SK-N-SH (cell line): ENCODE measurements at regions of chr17 and their contacts with region 1.

Region 1: GRCh38 chr17:76547184-76547641 is 7.4 kb downstream of the PRCD start:
- DNase-seq: peak; percentile 83
- H3K4me3 ChIP-seq: peak overlapping the region in 1 of 2 experiments; percentile 11; a peak in 2 of 4 replicates
- H3K27ac ChIP-seq: peak overlapping the region; percentile 57 to 99
- H3K4me1 ChIP-seq: peaks cover 25 to 56% of the 10 kb centered on the region in 2 experiments
- H3K27me3 ChIP-seq: peaks cover 9% of the 10 kb centered on the region; the same call in 1 of the 2 replicates
- CTCF ChIP-seq: peak; percentile 92
- EP300 ChIP-seq: peak in 1 of 2 experiments; percentile 7; a peak in 1 of 4 replicates
- RAD21 ChIP-seq: peak; percentile 99

Region 2: GRCh38 chr17:76452660-76453430 is 94.4 kb before region 1 on chr17 and contains the start of gene UBE2O:
- CTCF ChIA-PET with region 1: interaction called, 28 read pairs
- POLR2A ChIA-PET with region 1: interaction called, 3 read pairs
- DNase-seq: peak; percentile 100
- H3K4me3 ChIP-seq: peak within 1 kb of the TSS; percentile 74 to 95
- H3K27ac ChIP-seq: peak within 1 kb of the TSS; percentile 41 to 70
- H3K4me1 ChIP-seq: peaks cover 14 to 21% of the 10 kb centered on the region in 2 experiments
- H3K27me3 ChIP-seq: no peaks in the 10 kb centered on the region
- CTCF ChIP-seq: peak; percentile 64
- EP300 ChIP-seq: no peak; a peak in 1 of 4 replicates
- RAD21 ChIP-seq: no peak
- polyA plus RNA-seq, gene UBE2O: 20.0 and 25.4 TPM in 2 replicates

Region 3: DNA sequence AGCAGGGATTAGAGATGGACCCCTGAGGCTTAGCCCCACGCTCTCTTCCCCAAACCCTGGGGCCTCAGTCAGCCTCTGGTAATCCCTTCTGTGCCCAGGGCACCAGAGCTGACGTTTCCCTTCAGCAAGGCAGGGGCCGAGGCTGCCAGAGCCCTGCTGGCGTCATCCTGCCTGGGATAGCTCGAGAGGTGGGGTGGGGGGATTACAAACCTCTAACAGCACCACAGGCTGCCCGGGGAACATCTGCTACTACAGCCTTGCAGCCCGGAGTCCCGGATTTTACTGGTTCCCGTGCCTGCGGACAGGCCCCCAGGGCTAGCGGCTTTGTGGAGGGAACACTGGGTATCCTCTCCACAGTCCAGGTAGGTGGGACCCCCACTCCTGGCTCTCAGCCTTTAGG is 79.8 kb before region 1 on chr17 and contains the start of gene AANAT:
- CTCF ChIA-PET with region 1: interaction called, 16 read pairs
- POLR2A ChIA-PET with region 1: no interaction called
- DNase-seq: no peak
- H3K4me3 ChIP-seq: no peak within 1 kb of the TSS
- H3K27ac ChIP-seq: no peak within 1 kb of the TSS
- H3K4me1 ChIP-seq: no peaks in the 10 kb centered on the region; a peak in 1 of 4 replicates
- H3K27me3 ChIP-seq: no peaks in the 10 kb centered on the region
- CTCF ChIP-seq: no peak
- EP300 ChIP-seq: no peak
- RAD21 ChIP-seq: no peak
- polyA plus RNA-seq, gene AANAT: 0.26 TPM in 1 of 2 replicates, not detected in the other

Region 4: DNA sequence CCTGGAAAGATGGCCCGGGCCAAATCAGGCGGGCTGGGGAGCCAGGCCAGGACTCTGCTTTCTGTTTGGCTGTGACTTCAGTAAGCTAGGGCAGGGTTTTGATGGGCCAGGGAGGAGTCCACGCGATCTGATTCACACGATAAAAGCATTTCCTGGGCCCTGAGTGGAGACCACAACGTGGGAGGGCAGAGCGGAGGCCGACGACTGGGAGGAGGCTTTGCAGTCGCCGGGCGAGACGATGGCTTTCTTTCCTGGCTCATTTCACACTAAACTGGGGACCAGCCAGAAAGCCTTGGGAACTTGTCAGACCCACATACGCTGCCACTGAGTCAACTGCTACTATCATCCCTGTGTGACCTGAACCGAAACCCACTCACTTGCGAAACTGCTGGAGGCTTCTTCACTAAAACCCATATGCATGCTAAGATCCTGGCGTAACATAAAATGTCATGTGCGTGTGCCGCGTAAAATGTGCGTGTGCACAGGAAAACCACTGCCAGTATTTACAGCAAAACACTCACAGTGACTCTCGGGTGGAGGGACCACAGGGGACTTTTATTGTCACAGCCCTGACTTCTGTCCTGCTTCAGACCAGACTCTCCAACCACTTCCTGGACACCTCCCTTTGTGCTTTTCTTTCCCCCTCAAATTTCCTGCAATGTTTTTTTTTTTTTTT is 31.8 kb before region 1 on chr17:
- CTCF ChIA-PET with region 1: interaction called, 679 read pairs
- POLR2A ChIA-PET with region 1: interaction called, 26 read pairs
- DNase-seq: no peak
- H3K4me3 ChIP-seq: no peak overlapping the region
- H3K27ac ChIP-seq: no peak overlapping the region
- H3K4me1 ChIP-seq: peaks cover 0 to 6% of the 10 kb centered on the region in 2 experiments; a peak in 1 of 4 replicates
- H3K27me3 ChIP-seq: peaks cover 27% of the 10 kb centered on the region; the same call in 1 of the 2 replicates
- CTCF ChIP-seq: no peak
- EP300 ChIP-seq: no peak
- RAD21 ChIP-seq: no peak

Region 5: GRCh38 chr17:76726231-76726775 is 179.1 kb after region 1 on chr17 and contains the start of gene JMJD6:
- CTCF ChIA-PET with region 1: no interaction called
- POLR2A ChIA-PET with region 1: interaction called, 10 read pairs
- DNase-seq: peak; percentile 99
- H3K4me3 ChIP-seq: peak within 1 kb of the TSS; percentile 74 to 99
- H3K27ac ChIP-seq: peak within 1 kb of the TSS; percentile 94 to 96
- H3K4me1 ChIP-seq: peaks cover 14 to 20% of the 10 kb centered on the region in 2 experiments
- H3K27me3 ChIP-seq: no peaks in the 10 kb centered on the region
- CTCF ChIP-seq: no peak
- EP300 ChIP-seq: no peak
- RAD21 ChIP-seq: no peak
- polyA plus RNA-seq, gene JMJD6: 20.1 and 23.3 TPM in 2 replicates